HepG2 (cell line): ENCODE measurements at regions of chrX and their contacts with region 1.

Region 1: GRCh38 chrX:120769576-120770341 is 105.9 kb downstream of the CT47B1 start:
- DNase-seq: peak; percentile 59
- ATAC-seq: no peak
- H3K4me3 ChIP-seq: no peak overlapping the region
- H3K27ac ChIP-seq: no peak overlapping the region
- H3K4me1 ChIP-seq: peaks cover 7% of the 10 kb centered on the region
- H3K27me3 ChIP-seq: no peaks in the 10 kb centered on the region
- CTCF ChIP-seq: peak; percentile 58
- EP300 ChIP-seq: no peak
- POLR2A ChIP-seq: no peak
- RAD21 ChIP-seq: peak; percentile 41; the same call in 1 of the 2 replicates

Region 2: GRCh38 chrX:119574394-119575266 is 1195.1 kb before region 1 on chrX and contains the start of gene UBE2A:
- CTCF ChIA-PET with region 1: no interaction called
- POLR2A ChIA-PET with region 1: no interaction called
- in situ Hi-C with region 1: no loop called
- intact Hi-C with region 1: no loop called
- DNase-seq: peak; percentile 69
- ATAC-seq: peak; percentile 92
- H3K4me3 ChIP-seq: peak within 1 kb of the TSS; percentile 78 to 85 (median 79)
- H3K27ac ChIP-seq: peak within 1 kb of the TSS; percentile 79
- H3K4me1 ChIP-seq: peaks cover 30% of the 10 kb centered on the region; the same call in 1 of the 2 replicates
- H3K27me3 ChIP-seq: no peaks in the 10 kb centered on the region
- CTCF ChIP-seq: 0 out of 2 replicates have a peak, but pooled peaks have one; percentile 26
- EP300 ChIP-seq: no peak
- POLR2A ChIP-seq: peak; percentile 95
- RAD21 ChIP-seq: no peak
- total RNA-seq, gene UBE2A: 17.0 and 22.0 TPM in 2 replicates

Region 3: DNA sequence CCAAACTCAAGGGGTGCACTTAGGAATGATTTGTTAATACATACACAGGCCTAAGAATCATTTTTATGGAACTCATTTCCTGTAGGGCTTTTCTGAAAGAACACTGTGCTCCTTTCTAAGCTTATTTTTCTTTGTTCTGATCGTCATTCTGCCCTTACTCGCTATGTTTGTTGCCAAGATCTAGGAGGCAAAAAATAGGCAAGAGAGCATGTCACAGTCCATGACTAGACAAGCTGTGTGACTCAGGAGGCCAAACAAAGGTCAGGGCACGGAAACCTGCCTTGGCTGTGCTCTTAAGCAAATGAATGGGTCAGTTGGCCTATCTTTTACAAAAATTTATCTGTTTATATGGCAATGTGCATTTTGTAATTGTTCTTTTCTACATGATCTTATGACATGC is 97.4 kb before region 1 on chrX:
- CTCF ChIA-PET with region 1: no interaction called
- POLR2A ChIA-PET with region 1: no interaction called
- in situ Hi-C with region 1: no loop called
- intact Hi-C with region 1: loop called (anchors 2 kb)
- DNase-seq: peak; percentile 18
- ATAC-seq: peak; percentile 60; the same call in 2 of the 3 replicates
- H3K4me3 ChIP-seq: no peak overlapping the region
- H3K27ac ChIP-seq: no peak overlapping the region
- H3K4me1 ChIP-seq: peaks cover 10% of the 10 kb centered on the region; the same call in 1 of the 2 replicates
- H3K27me3 ChIP-seq: no peaks in the 10 kb centered on the region
- CTCF ChIP-seq: no peak
- EP300 ChIP-seq: no peak
- POLR2A ChIP-seq: no peak
- RAD21 ChIP-seq: no peak

Region 4: GRCh38 chrX:120790118-120790517 is 20.4 kb after region 1 on chrX:
- CTCF ChIA-PET with region 1: no interaction called
- POLR2A ChIA-PET with region 1: no interaction called
- in situ Hi-C with region 1: no loop called
- intact Hi-C with region 1: no loop called
- DNase-seq: peak; percentile 40
- ATAC-seq: peak; percentile 30; the same call in 1 of the 3 replicates
- H3K4me3 ChIP-seq: no peak overlapping the region
- H3K27ac ChIP-seq: no peak overlapping the region
- H3K4me1 ChIP-seq: no peaks in the 10 kb centered on the region
- H3K27me3 ChIP-seq: no peaks in the 10 kb centered on the region
- CTCF ChIP-seq: peak; percentile 72
- EP300 ChIP-seq: no peak
- POLR2A ChIP-seq: no peak
- RAD21 ChIP-seq: peak; percentile 58; the same call in 1 of the 2 replicates

Region 5: DNA sequence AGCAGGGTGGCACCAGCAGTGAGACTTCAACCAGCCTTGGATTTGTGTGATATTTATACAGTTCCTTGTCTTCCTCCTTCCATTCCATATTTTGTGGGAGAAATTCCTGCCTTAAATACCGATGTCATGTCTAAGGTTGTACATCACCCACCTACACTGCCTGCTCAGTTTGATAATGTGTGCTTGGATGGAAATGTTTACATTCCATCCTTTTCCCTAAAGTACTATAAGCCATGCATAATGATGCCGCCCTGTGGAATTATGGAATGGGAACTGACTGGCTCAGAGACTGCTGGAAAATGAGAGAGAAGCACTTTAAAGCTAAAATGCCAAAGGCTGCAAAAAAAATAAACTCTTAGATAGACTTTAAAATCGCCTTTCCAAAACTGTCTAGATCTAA is 266.4 kb after region 1 on chrX:
- CTCF ChIA-PET with region 1: no interaction called
- POLR2A ChIA-PET with region 1: no interaction called
- in situ Hi-C with region 1: no loop called
- intact Hi-C with region 1: no loop called
- DNase-seq: no peak
- ATAC-seq: no peak
- H3K4me3 ChIP-seq: no peak overlapping the region
- H3K27ac ChIP-seq: no peak overlapping the region
- H3K4me1 ChIP-seq: peaks cover 14% of the 10 kb centered on the region; the same call in 1 of the 2 replicates
- H3K27me3 ChIP-seq: no peaks in the 10 kb centered on the region
- CTCF ChIP-seq: no peak
- EP300 ChIP-seq: no peak
- POLR2A ChIP-seq: no peak
- RAD21 ChIP-seq: no peak

Region 6: DNA sequence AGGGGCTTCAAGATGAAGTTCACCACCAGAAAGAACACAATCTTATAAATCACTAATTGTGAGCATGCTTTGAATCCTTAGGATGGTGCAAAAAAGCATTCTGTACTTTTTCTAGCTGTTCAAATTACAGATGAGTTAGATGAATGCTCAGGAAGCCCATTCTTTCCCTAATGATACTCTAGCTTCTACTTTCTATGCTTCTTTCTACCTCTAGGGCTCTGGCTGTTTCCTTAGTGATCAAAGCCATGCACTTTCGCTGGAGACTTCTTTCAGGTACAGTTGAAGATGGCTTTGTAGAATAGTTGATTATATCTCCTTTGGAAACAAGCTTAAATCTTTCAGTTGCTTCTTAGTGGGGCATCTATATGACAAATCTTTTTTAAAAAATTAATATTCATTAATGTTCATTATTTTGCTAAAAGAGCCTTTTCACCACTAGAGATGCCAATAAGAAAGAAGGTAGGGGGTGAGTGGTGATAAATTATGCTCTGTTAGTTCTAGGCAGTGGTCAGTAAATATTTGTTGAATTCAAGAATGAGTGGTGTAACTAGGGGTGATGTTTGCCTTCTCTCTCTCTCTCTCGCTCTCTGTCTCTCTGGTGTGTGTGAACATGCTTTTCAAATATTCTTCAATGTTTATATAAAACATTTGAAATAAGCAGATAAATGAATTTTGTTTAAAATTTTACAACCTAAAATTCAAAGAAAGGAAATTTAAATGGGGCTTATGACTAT is 447.0 kb after region 1 on chrX:
- CTCF ChIA-PET with region 1: no interaction called
- POLR2A ChIA-PET with region 1: no interaction called
- in situ Hi-C with region 1: no loop called
- intact Hi-C with region 1: no loop called
- DNase-seq: no peak
- ATAC-seq: peak; percentile 67; the same call in 2 of the 3 replicates
- H3K4me3 ChIP-seq: no peak overlapping the region
- H3K27ac ChIP-seq: no peak overlapping the region
- H3K4me1 ChIP-seq: peaks cover 25% of the 10 kb centered on the region
- H3K27me3 ChIP-seq: no peaks in the 10 kb centered on the region
- CTCF ChIP-seq: no peak
- EP300 ChIP-seq: no peak
- POLR2A ChIP-seq: no peak
- RAD21 ChIP-seq: no peak